SK-N-SH (cell line): ENCODE measurements at regions of chrX and their contacts with region 1.

Region 1: DNA sequence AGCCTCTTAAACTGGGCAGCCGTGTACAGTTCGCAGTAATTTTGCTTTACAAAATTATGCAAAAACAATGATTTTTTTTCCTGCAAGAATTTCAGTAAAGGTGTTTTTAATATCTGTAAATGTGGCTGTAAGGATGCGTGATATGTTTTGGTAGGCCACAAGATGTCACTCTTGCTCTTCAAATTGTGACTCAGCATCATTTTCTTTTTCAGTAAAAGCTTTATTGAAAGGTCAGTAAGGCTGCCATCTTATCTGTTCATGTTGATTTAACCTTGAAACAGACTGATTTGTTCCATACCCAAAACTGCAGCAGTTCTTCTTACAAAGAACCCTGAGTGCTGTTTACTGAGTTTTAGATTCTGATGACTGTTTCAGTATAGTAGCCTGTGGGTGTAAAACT is 39.9 kb downstream of the TXLNG start:
- DNase-seq: peak; percentile 44
- H3K4me3 ChIP-seq: no peak overlapping the region
- H3K27ac ChIP-seq: peak overlapping the region; percentile 75 to 81
- H3K4me1 ChIP-seq: peaks cover 11 to 23% of the 10 kb centered on the region in 2 experiments; a peak in 2 of 4 replicates
- H3K27me3 ChIP-seq: no peaks in the 10 kb centered on the region
- CTCF ChIP-seq: peak; percentile 77
- EP300 ChIP-seq: peak in 1 of 2 experiments; percentile 41; a peak in 2 of 4 replicates
- RAD21 ChIP-seq: peak; percentile 87

Region 2: GRCh38 chrX:16836371-16836770 is 10.2 kb after region 1 on chrX:
- CTCF ChIA-PET with region 1: interaction called, 24 read pairs
- POLR2A ChIA-PET with region 1: no interaction called
- DNase-seq: peak; percentile 47
- H3K4me3 ChIP-seq: no peak overlapping the region
- H3K27ac ChIP-seq: no peak overlapping the region
- H3K4me1 ChIP-seq: peaks cover 14 to 16% of the 10 kb centered on the region in 2 experiments; a peak in 3 of 4 replicates
- H3K27me3 ChIP-seq: no peaks in the 10 kb centered on the region
- CTCF ChIP-seq: peak; percentile 43; the same call in 1 of the 2 replicates
- EP300 ChIP-seq: no peak
- RAD21 ChIP-seq: no peak

Region 3: GRCh38 chrX:16870095-16870860 is 44.1 kb after region 1 on chrX and contains the start of gene RBBP7:
- CTCF ChIA-PET with region 1: interaction called, 12 read pairs
- POLR2A ChIA-PET with region 1: no interaction called
- DNase-seq: peak; percentile 98
- H3K4me3 ChIP-seq: peak within 1 kb of the TSS; percentile 82 to 88
- H3K27ac ChIP-seq: peak within 1 kb of the TSS; percentile 91 to 97
- H3K4me1 ChIP-seq: peaks cover 7 to 11% of the 10 kb centered on the region in 2 experiments; a peak in 3 of 4 replicates
- H3K27me3 ChIP-seq: peaks cover 14% of the 10 kb centered on the region; the same call in 1 of the 2 replicates
- CTCF ChIP-seq: no peak
- EP300 ChIP-seq: no peak
- RAD21 ChIP-seq: no peak
- polyA plus RNA-seq, gene RBBP7: 172 and 198 TPM in 2 replicates

Region 4: DNA sequence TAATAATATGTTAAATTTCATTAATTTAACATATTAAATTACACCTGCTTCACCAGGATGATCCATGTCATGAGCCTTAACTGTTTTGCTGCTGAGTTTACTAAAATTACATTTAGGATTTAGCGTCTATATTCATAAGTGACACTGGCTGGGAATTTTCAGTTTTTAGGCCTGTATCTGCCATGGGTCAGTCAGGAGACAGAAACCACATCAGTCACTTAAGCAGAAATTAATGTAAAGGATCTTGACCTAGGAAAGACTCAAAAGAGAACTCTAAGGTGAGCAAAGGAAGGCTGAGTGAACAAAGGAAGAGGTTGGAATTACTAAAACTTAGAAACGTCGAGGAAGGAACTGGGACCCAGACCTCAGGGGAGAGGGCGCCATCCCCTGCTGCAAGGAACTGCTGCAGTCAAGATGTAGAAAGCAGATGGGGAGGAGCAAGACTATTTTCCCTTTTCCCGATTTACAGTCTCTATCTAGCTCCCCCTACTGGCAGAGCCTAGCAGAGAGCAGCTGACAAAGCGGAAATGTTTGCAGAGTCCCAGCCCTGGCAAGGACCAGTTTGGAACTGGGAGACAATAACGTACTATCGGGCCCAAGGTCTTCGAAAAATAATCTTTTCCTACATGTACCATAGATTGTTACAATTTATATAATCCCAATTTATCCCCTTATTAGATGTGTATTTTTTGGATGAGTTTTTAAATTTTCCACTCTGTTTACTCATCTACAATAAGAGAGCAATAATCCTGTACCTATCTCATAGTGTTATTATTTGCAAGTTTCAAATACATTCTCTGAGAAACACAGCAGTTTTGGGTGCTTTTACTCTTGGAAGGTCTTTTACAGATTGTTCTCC is 66.5 kb after region 1 on chrX:
- CTCF ChIA-PET with region 1: interaction called, 20 read pairs
- POLR2A ChIA-PET with region 1: no interaction called
- DNase-seq: peak; percentile 67
- H3K4me3 ChIP-seq: no peak overlapping the region; a peak in 1 of 4 replicates
- H3K27ac ChIP-seq: no peak overlapping the region
- H3K4me1 ChIP-seq: no peaks in the 10 kb centered on the region
- H3K27me3 ChIP-seq: peaks cover 12% of the 10 kb centered on the region
- CTCF ChIP-seq: peak; percentile 94
- EP300 ChIP-seq: no peak
- RAD21 ChIP-seq: peak; percentile 62

Region 5: DNA sequence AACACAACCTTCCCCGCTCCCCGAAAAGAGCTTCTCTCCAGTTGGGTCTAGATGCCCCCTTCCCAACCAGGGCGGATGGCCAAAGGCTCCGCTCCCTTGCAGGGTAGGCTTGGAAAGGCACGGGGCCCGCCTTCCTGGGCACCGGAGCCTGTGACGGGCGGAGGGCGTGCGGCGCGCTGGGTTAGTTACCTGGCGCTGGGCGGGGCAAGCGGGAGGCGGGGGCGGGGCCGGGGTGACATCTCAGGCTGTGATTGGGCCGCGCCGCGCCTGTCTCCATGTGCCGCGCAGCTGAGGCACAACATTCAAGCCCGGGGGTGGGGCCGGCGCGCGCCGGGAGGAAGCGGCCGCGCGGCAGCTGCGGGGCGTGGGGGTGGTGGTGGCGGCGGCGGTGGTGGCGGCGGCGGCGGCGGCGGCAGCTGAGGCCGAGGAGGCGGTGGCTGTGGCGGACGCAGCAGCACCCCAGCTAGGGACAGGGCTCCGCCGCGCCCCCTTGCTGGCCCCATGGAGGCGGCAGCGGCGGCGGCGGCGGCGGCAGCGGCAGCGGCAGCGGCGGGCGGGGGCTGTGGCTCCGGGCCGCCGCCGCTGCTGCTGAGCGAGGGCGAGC is 120.3 kb after region 1 on chrX and contains the start of gene REPS2:
- CTCF ChIA-PET with region 1: no interaction called
- POLR2A ChIA-PET with region 1: no interaction called
- DNase-seq: peak; percentile 90
- H3K4me3 ChIP-seq: peak within 1 kb of the TSS; percentile 58 to 62
- H3K27ac ChIP-seq: no peak within 1 kb of the TSS
- H3K4me1 ChIP-seq: peaks cover 0 to 2% of the 10 kb centered on the region in 2 experiments; a peak in 1 of 4 replicates
- H3K27me3 ChIP-seq: 0 out of 2 replicates have a peak, but pooled peaks cover 7% of the 10 kb centered on the region
- CTCF ChIP-seq: no peak
- EP300 ChIP-seq: no peak
- RAD21 ChIP-seq: no peak
- polyA plus RNA-seq, gene REPS2: 0.62 and 0.73 TPM in 2 replicates

Region 6: GRCh38 chrX:17082831-17083230 is 256.6 kb after region 1 on chrX:
- CTCF ChIA-PET with region 1: interaction called, 22 read pairs
- POLR2A ChIA-PET with region 1: no interaction called
- DNase-seq: peak; percentile 37
- H3K4me3 ChIP-seq: no peak overlapping the region
- H3K27ac ChIP-seq: no peak overlapping the region
- H3K4me1 ChIP-seq: peaks cover 4 to 10% of the 10 kb centered on the region in 2 experiments; a peak in 2 of 4 replicates
- H3K27me3 ChIP-seq: no peaks in the 10 kb centered on the region
- CTCF ChIP-seq: peak; percentile 53
- EP300 ChIP-seq: no peak
- RAD21 ChIP-seq: peak; percentile 64